Activated CD4-positive, alpha-beta memory T cell treated with anti-CD3 and anti-CD28 coated beads, Interleukin-2, amount 10 ng/mL, durations not matched to agents 7 days and 5 days (primary cell): ENCODE measurements at regions of chr2 and their contacts with region 1.

Region 1: DNA sequence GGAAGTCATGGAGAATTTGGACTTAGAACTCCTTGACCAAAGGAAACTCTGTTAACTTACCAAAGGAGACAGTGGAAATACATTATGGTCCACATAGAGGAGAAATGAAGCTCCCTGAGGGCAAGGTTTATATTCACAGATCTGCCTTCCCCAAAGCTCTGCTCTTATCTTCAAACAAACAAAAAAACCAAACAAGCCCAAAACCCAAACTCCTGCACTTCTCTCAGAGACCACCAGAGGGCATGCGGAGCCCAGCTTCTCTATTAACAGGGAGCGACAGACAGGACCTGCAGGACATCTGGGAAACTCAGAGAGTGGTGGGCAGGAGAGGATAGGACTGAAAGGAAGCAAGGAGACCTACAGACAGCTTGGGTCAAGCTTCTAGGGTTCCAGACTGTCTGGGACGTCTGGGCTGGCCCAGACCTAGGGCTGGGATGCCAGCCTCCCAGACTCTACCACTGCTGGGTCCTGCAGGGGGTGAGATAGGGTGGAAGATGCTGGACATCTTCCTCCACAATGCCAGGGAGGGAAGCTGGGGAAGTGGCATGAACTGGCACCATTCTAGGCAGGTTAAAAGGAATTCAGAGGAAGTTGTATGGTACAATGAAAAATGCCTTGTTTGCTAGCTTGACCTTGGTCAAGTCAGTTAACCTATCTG is 4.0 kb upstream of the WNT10A start:
- DNase-seq: peak; percentile 71
- H3K4me3 Mint-ChIP-seq: no peak overlapping the region
- H3K27ac Mint-ChIP-seq: no peak overlapping the region
- H3K4me1 Mint-ChIP-seq: peaks cover 18% of the 10 kb centered on the region
- H3K27me3 Mint-ChIP-seq: peaks cover 73% of the 10 kb centered on the region

Region 2: GRCh38 chr2:218367415-218368153 is 509.1 kb before region 1 on chr2:
- CTCF ChIA-PET with region 1: no interaction called
- POLR2A ChIA-PET with region 1: no interaction called
- DNase-seq: peak; percentile 82
- H3K4me3 Mint-ChIP-seq: peak overlapping the region; percentile 77
- H3K27ac Mint-ChIP-seq: peak overlapping the region; percentile 74
- H3K4me1 Mint-ChIP-seq: peaks cover 35% of the 10 kb centered on the region
- H3K27me3 Mint-ChIP-seq: peaks cover 7% of the 10 kb centered on the region

Region 3: GRCh38 chr2:218892693-218893348 is 16.1 kb after region 1 on chr2:
- CTCF ChIA-PET with region 1: interaction called, 387 read pairs
- POLR2A ChIA-PET with region 1: interaction called, 101 read pairs
- DNase-seq: peak; percentile 86
- H3K4me3 Mint-ChIP-seq: peak overlapping the region; percentile 60
- H3K27ac Mint-ChIP-seq: peak overlapping the region; percentile 28
- H3K4me1 Mint-ChIP-seq: peaks cover 41% of the 10 kb centered on the region
- H3K27me3 Mint-ChIP-seq: peaks cover 56% of the 10 kb centered on the region

Region 4: GRCh38 chr2:218908721-218909619 is 32.3 kb after region 1 on chr2:
- CTCF ChIA-PET with region 1: interaction called, 29 read pairs
- POLR2A ChIA-PET with region 1: interaction called, 3 read pairs
- DNase-seq: peak; percentile 92
- H3K4me3 Mint-ChIP-seq: peak overlapping the region; percentile 83
- H3K27ac Mint-ChIP-seq: peak overlapping the region; percentile 72
- H3K4me1 Mint-ChIP-seq: peaks cover 22% of the 10 kb centered on the region
- H3K27me3 Mint-ChIP-seq: peaks cover 17% of the 10 kb centered on the region